ENCODE measurements at regions of chr2 and their contacts with region 1.

Region 1: DNA sequence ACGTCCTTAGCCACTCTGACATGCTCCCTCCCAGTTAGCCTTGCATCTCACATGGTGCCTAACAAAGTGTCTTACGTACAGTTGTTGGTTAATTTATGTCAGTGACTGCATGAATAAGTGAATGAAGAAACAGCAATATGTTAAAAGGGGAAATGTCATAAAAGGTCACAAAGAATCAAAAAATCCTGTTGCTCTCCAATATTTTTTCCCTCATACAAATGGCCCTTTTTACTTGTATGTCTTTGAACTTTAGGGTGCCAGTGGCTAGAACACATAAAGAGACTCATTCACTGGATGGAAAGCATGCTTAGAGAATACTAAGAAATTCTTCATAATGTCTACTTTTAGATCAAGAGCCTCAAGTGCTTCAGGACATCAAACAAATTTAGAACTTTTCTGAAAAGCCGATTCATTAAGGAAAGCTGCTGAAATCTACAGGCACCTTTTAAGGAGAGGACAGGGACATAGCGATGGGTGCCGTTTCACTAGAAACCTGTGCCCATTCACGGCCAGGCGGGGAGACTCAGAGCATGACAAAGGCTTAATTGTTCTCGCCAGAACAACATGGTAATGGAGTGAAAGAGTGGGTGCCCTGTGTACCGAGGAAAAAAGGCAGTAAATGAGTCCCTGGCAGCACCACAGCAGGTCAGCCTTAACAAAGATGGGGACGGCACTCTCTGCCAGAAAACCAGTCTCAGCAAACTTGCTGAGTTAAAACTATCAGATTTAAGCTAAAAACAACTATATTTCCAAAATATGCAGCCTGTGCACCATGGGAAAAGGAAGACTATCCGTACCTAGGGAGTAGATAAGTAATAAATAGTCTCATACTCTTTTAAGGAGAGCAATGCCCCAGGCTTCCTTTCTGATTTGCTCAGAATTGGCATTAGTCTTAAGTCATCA is 71.6 kb upstream of the SPTBN1 start:
- DNase-seq: peak; percentile 51 to 90 (median 74)

Region 2: GRCh38 chr2:54455563-54456361 is 71.2 kb after region 1 on chr2 and contains the start of gene SPTBN1:
- intact Hi-C with region 1: loop called (anchors 5 kb)
- DNase-seq: peak; percentile 83 to 98 (median 95)

Region 3: GRCh38 chr2:54522624-54523281 is 138.2 kb after region 1 on chr2:
- intact Hi-C with region 1: no loop called
- DNase-seq: peak in 20 of 42 donors; percentile 11 to 73 (median 36)